ENCODE measurements at regions of chr1 and their contacts with region 1.

Region 1: DNA sequence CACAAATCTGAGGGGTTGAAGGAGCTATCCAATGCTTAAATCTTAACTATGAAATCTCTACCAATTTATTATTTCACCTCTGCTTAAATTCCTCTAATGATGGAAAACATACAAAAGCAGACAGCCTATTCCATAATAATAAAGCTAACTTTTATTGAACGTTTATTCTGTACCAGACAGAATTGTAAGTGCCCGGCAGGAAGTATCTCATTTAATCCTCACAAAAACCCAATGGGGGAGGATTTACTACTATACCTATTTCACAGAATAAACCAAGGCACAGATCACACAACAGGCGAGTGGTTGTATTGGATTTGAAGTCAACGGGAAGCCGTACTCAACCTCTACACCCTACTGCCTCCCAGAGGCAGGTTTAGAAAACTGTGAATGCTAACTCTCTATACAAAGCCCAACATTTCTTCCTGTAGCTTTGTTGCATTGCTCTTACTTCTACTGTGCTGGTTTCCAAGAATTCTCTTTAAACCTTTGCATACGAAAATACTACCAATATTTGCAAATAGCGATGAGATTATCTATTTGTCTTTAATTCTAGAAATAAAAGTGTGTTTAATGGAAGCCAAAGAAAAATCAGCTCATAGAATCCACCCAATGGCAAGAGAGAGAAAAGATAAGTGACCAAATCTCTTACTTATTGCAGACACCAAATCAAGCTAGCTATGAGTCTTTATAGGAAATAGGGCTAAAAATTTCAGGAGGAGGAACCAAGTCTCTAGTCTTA is 33.5 kb upstream of the C1orf53 start:
- DNase-seq: peak in 29 of 35 experiments; percentile 4 to 61 (median 26)
- ATAC-seq: peak; percentile 75 to 88 (median 87)
- H3K4me3 ChIP-seq: no peak overlapping the region
- H3K4me3 Mint-ChIP-seq: no peak overlapping the region
- H3K27ac ChIP-seq: no peak overlapping the region
- H3K27ac Mint-ChIP-seq: no peak overlapping the region
- H3K4me1 ChIP-seq: no peaks in the 10 kb centered on the region
- H3K4me1 Mint-ChIP-seq: peaks cover 0 to 2% (median 0%) of the 10 kb centered on the region in 3 donors
- H3K27me3 ChIP-seq: no peaks in the 10 kb centered on the region
- H3K27me3 Mint-ChIP-seq: peaks cover 3 to 5% of the 10 kb centered on the region in 2 donors

Region 2: DNA sequence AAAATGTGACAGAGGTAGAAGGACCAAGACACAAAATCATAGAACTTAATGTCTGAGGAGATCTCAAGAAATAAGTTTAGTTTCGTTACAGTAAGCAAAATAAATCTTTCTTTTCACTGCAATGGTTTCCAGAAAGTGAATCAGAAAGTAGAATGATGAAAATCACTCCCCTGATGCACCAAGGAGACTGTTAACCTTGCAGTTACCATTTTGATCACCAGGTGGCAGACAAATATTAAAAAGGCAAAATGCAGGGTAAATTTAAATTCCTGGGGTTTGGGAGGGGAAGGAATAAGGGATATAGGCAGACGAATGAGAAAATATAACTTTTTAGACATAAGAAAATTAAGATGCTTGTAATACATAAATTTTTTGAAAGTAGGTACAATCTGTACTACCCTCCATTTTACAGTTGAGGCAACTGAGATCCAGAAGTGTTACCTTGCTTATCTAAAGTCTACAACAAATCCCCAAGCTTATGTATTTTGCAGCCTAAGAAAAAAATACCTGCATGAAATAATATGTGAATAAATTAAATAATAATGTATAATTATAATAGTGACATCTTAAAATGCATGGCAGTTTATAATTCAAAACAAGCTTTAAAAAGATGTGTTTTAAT is 347.7 kb before region 1 on chr1:
- CTCF ChIA-PET with region 1: interaction called, 10 to 14 read pairs
- POLR2A ChIA-PET with region 1: no interaction called
- DNase-seq: peak in 7 of 35 experiments; percentile 2 to 60 (median 12)
- ATAC-seq: no peak
- H3K4me3 ChIP-seq: no peak overlapping the region
- H3K4me3 Mint-ChIP-seq: no peak overlapping the region
- H3K27ac ChIP-seq: no peak overlapping the region
- H3K27ac Mint-ChIP-seq: no peak overlapping the region
- H3K4me1 ChIP-seq: no peaks in the 10 kb centered on the region
- H3K4me1 Mint-ChIP-seq: peaks cover 0 to 3% (median 0%) of the 10 kb centered on the region in 3 donors
- H3K27me3 ChIP-seq: no peaks in the 10 kb centered on the region
- H3K27me3 Mint-ChIP-seq: no peaks in the 10 kb centered on the region

Region 3: DNA sequence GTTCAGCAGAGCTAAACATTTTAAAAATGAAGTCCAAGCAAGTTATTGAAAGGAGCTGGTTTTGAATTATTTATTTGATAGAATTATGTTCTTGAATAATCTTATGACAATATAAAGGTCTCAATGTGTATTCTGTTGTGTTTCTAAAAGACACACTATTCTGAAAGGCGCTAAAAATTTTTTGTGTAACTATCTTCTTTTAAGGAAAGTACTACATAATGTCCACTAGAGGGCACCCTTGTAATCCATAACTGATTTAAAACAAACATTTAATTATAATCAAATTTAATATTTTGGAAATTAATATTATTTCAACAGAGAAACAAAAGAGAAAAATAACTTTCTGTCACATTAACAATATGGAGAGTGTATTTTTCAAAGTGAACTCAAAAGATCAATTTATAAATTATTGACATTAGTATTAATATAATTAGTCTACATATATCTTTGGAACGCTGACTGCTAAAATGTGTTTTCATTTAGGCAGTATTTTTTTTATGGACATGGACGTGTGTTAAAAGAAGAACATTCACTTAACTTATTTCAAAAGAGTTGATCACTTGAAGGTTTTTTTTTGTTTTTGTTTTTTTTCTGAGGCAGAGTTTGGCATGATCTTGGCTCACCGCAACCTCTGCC is 342.1 kb before region 1 on chr1:
- CTCF ChIA-PET with region 1: interaction called, 5 to 14 read pairs
- POLR2A ChIA-PET with region 1: no interaction called
- DNase-seq: peak in 1 of 35 experiments; percentile 60
- ATAC-seq: no peak
- H3K4me3 ChIP-seq: no peak overlapping the region
- H3K4me3 Mint-ChIP-seq: no peak overlapping the region
- H3K27ac ChIP-seq: no peak overlapping the region
- H3K27ac Mint-ChIP-seq: no peak overlapping the region
- H3K4me1 ChIP-seq: no peaks in the 10 kb centered on the region
- H3K4me1 Mint-ChIP-seq: no peaks in the 10 kb centered on the region
- H3K27me3 ChIP-seq: no peaks in the 10 kb centered on the region
- H3K27me3 Mint-ChIP-seq: no peaks in the 10 kb centered on the region

Region 4: DNA sequence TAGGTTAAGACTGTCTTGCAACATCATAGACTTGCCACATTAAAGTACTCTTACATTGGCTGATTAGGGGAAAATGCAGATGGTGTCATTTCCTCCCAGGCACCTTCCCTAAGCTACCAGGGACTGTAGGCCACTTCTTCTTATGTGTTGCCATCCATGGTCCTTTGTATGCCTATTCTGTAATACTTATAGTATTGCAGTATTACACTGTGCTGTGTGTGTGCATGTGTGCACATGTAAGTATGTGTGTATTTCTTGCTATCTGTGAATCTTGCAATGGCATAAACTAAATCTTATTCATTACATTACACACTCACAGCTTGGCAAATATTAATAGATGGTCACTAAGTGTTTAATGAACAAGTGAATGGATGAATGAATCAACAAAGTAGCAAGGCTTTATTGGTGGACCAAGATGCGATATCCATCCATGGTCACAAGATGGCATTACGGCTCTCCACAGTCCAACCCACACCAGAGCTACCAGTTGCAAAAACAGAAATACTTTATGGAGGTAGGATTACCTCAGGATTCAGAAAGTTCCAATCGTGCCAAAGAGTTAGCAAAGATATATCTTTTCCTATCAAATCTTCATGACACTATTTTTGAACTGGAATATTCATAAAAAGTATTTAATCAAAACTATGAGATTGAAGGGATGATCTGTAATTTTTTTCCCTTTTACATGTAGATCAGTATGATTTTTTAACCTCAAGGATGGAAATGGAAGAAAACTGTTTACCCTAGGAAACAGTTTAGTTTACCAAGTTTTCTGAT is 253.8 kb before region 1 on chr1:
- CTCF ChIA-PET with region 1: interaction called, 9 to 39 read pairs
- POLR2A ChIA-PET with region 1: no interaction called
- DNase-seq: peak in 13 of 35 experiments; percentile 0 to 54 (median 4)
- ATAC-seq: peak in 2 of 4 experiments; percentile 26 to 41
- H3K4me3 ChIP-seq: no peak overlapping the region
- H3K4me3 Mint-ChIP-seq: no peak overlapping the region
- H3K27ac ChIP-seq: no peak overlapping the region
- H3K27ac Mint-ChIP-seq: no peak overlapping the region
- H3K4me1 ChIP-seq: no peaks in the 10 kb centered on the region
- H3K4me1 Mint-ChIP-seq: peaks cover 0 to 2% (median 0%) of the 10 kb centered on the region in 3 donors
- H3K27me3 ChIP-seq: no peaks in the 10 kb centered on the region
- H3K27me3 Mint-ChIP-seq: no peaks in the 10 kb centered on the region

Region 5: DNA sequence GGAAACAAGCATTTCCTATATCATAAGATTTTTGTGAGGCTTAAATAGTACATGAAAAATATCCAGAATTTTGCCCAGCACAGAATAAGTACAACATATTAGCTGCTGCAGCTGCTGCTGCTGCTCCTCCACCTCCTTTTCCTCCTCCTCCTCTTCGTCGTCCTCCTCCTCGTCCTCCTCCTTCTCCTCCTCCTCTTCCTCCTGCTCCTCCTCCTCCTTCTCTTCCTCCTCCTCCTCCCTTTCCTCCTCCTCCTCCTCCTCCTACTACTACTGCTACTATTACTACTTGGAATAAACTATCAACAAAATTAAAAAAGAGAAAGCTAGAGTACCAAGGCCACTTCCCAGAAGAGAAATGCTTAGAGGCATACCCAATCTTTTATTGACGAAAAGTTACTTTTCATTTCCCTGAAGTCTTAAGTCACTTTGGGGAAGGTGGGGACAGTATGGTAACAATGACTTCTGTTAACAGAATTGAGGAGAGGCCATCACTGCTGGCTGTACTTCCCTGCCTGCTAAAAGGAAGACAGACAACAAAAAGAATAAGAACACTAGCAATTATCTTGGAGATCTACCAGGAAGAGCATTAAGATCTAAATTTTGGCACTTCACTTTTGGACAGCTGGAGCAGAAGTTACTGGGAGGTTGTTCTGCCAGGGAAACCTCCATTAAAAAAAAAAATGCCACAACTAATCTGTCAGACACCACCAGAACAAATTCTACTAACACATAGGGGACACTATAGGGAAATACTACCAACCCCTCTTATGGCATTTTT is 100.7 kb before region 1 on chr1:
- CTCF ChIA-PET with region 1: no interaction called
- POLR2A ChIA-PET with region 1: no interaction called
- DNase-seq: no peak
- ATAC-seq: no peak
- H3K4me3 ChIP-seq: no peak overlapping the region
- H3K4me3 Mint-ChIP-seq: peak overlapping the region in 1 of 3 donors; percentile 22
- H3K27ac ChIP-seq: no peak overlapping the region
- H3K27ac Mint-ChIP-seq: peak overlapping the region in 1 of 2 donors; percentile 57
- H3K4me1 ChIP-seq: peaks cover 0 to 13% of the 10 kb centered on the region in 2 experiments
- H3K4me1 Mint-ChIP-seq: peaks cover 76 to 84% (median 82%) of the 10 kb centered on the region in 3 donors
- H3K27me3 ChIP-seq: no peaks in the 10 kb centered on the region
- H3K27me3 Mint-ChIP-seq: no peaks in the 10 kb centered on the region

Region 6: GRCh38 chr1:197841883-197842553 is 26.9 kb before region 1 on chr1:
- CTCF ChIA-PET with region 1: no interaction called
- POLR2A ChIA-PET with region 1: no interaction called
- DNase-seq: no peak
- ATAC-seq: no peak
- H3K4me3 ChIP-seq: no peak overlapping the region
- H3K4me3 Mint-ChIP-seq: no peak overlapping the region
- H3K27ac ChIP-seq: no peak overlapping the region
- H3K27ac Mint-ChIP-seq: no peak overlapping the region
- H3K4me1 ChIP-seq: no peaks in the 10 kb centered on the region
- H3K4me1 Mint-ChIP-seq: peaks cover 0 to 3% (median 0%) of the 10 kb centered on the region in 3 donors
- H3K27me3 ChIP-seq: no peaks in the 10 kb centered on the region
- H3K27me3 Mint-ChIP-seq: peaks cover 0 to 9% of the 10 kb centered on the region in 2 donors